ENCODE measurements at regions of chr4 and their contacts with region 1.

Region 1: GRCh38 chr4:41957634-41958033 is 22.4 kb downstream of the TMEM33 start:
- DNase-seq: peak; percentile 34
- ATAC-seq: peak; percentile 57
- H3K4me3 Mint-ChIP-seq: no peak overlapping the region
- H3K27ac Mint-ChIP-seq: no peak overlapping the region
- H3K4me1 Mint-ChIP-seq: no peaks in the 10 kb centered on the region
- H3K27me3 Mint-ChIP-seq: no peaks in the 10 kb centered on the region

Region 2: DNA sequence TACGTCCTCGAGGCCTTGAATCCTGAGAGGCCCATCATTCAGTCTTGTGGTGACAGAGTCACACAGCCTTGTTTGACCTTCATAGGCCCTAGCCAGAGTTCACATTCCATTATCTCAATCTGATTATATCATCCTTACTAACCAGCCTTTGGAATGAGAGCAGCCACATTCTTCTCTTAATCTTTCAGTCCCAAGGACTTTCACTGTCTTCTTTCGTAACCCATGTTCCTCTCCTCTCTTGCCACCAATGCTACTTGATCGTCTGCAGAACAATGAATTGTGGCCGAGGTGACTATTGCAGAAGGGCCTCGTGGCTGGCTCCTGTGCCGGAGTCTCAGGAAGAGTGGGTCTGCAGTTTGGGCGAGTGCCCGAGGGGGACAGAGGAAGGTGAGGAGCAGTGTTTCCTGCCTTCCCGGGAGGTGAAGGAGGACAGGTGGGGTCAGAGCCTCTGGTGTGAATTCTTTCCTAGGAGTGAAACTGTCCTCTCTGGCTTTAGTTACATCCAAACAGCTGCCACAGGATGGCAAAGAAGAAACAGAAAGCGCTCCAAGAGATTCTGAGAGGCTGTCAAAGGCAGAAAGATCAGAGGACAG is 325.1 kb before region 1 on chr4:
- CTCF ChIA-PET with region 1: no interaction called
- POLR2A ChIA-PET with region 1: no interaction called
- DNase-seq: no peak
- ATAC-seq: no peak
- H3K4me3 Mint-ChIP-seq: no peak overlapping the region
- H3K27ac Mint-ChIP-seq: no peak overlapping the region
- H3K4me1 Mint-ChIP-seq: no peaks in the 10 kb centered on the region
- H3K27me3 Mint-ChIP-seq: no peaks in the 10 kb centered on the region

Region 3: GRCh38 chr4:41887821-41888686 is 69.6 kb before region 1 on chr4:
- CTCF ChIA-PET with region 1: no interaction called
- POLR2A ChIA-PET with region 1: no interaction called
- DNase-seq: peak; percentile 56
- ATAC-seq: no peak
- H3K4me3 Mint-ChIP-seq: no peak overlapping the region
- H3K27ac Mint-ChIP-seq: no peak overlapping the region
- H3K4me1 Mint-ChIP-seq: peaks cover 2% of the 10 kb centered on the region
- H3K27me3 Mint-ChIP-seq: peaks cover 27% of the 10 kb centered on the region

Region 4: GRCh38 chr4:41990365-41991111 is 32.9 kb after region 1 on chr4 and contains the start of gene SLC30A9:
- CTCF ChIA-PET with region 1: interaction called, 10 read pairs
- POLR2A ChIA-PET with region 1: no interaction called
- DNase-seq: peak; percentile 96
- ATAC-seq: peak; percentile 94
- H3K4me3 Mint-ChIP-seq: peak within 1 kb of the TSS; percentile 90
- H3K27ac Mint-ChIP-seq: peak within 1 kb of the TSS; percentile 91
- H3K4me1 Mint-ChIP-seq: peaks cover 25% of the 10 kb centered on the region
- H3K27me3 Mint-ChIP-seq: no peaks in the 10 kb centered on the region
- total RNA-seq, gene SLC30A9: 30.9 to 32.0 TPM

Region 5: GRCh38 chr4:42420140-42420539 is 462.5 kb after region 1 on chr4:
- CTCF ChIA-PET with region 1: no interaction called
- POLR2A ChIA-PET with region 1: no interaction called
- DNase-seq: no peak
- ATAC-seq: no peak
- H3K4me3 Mint-ChIP-seq: no peak overlapping the region
- H3K27ac Mint-ChIP-seq: no peak overlapping the region
- H3K4me1 Mint-ChIP-seq: no peaks in the 10 kb centered on the region
- H3K27me3 Mint-ChIP-seq: no peaks in the 10 kb centered on the region

Measured in activated CD8-positive, alpha-beta T cell treated with anti-CD3 and anti-CD28 coated beads, Interleukin-2, amount 10 ng/mL, durations not matched to agents 7 days and 5 days (primary cell).